ENCODE measurements at regions of chr7 and their contacts with region 1.

Region 1: GRCh38 chr7:151244196-151244840 is 4.2 kb downstream of the SMARCD3 start:
- DNase-seq: peak in 1 of 2 donors; percentile 54
- ATAC-seq: no peak
- H3K4me3 ChIP-seq: peak overlapping the region in 2 of 4 donors; percentile 26 to 44
- H3K27ac ChIP-seq: peak overlapping the region in 3 of 4 donors; percentile 92 to 99 (median 96)
- H3K4me1 ChIP-seq: peaks cover 47 to 50% of the 10 kb centered on the region in 2 donors
- H3K27me3 ChIP-seq: no peaks in the 10 kb centered on the region
- CTCF ChIP-seq: peak; percentile 75 to 92 (median 80)
- POLR2A ChIP-seq: no peak

Region 2: DNA sequence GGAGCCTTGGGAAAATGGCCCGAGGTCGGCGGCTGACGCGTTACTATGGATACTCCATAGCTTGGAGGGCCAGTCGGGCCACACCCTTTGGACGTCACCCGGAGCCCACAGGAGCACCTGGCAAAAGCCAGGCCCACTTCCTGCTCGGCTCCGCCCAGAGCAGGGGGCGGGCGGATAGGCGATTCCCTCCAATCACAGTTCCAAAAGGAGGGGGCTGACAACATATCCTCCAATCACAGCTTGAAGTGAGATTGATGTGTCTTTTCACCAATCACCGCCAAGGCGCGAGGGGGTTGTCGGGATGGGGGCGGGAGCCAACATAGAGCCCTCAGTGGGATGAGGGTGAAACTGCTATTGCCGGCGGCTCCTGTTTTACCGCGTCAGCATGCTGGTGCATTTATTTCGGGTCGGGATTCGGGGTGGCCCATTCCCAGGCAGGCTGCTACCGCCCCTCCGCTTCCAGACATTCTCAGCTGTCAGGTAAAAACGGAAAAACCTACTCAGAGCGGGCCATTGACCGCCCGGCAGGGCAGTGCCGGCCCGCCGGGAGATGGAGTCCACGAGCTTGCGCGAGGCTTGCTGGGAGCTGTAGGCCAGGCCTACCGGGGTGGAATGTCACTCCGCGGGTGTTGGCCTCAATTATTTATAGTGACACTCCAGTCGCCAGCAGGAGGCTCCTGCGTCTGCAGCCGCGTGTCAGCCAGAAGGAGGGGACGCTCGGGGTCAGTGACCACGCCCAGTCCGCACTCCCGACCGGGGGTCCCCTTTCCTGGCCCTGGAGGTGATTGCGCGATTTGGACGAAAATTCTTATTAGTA is 216.0 kb before region 1 on chr7 and contains the start of gene ABCB8:
- in situ Hi-C with region 1: no loop called
- intact Hi-C with region 1: loop called (anchors 5 kb)
- DNase-seq: peak; percentile 99 to 100
- ATAC-seq: peak; percentile 99 to 100
- H3K4me3 ChIP-seq: peak within 1 kb of the TSS; percentile 66 to 82 (median 74)
- H3K27ac ChIP-seq: peak within 1 kb of the TSS; percentile 87 to 94 (median 88)
- H3K4me1 ChIP-seq: peaks cover 9 to 12% of the 10 kb centered on the region in 2 donors
- H3K27me3 ChIP-seq: no peaks in the 10 kb centered on the region
- CTCF ChIP-seq: peak; percentile 49 to 77 (median 66)
- POLR2A ChIP-seq: peak; percentile 79 to 83
- total RNA-seq, gene ABCB8: 10.4 to 25.7 (median 16.2) TPM

Region 3: DNA sequence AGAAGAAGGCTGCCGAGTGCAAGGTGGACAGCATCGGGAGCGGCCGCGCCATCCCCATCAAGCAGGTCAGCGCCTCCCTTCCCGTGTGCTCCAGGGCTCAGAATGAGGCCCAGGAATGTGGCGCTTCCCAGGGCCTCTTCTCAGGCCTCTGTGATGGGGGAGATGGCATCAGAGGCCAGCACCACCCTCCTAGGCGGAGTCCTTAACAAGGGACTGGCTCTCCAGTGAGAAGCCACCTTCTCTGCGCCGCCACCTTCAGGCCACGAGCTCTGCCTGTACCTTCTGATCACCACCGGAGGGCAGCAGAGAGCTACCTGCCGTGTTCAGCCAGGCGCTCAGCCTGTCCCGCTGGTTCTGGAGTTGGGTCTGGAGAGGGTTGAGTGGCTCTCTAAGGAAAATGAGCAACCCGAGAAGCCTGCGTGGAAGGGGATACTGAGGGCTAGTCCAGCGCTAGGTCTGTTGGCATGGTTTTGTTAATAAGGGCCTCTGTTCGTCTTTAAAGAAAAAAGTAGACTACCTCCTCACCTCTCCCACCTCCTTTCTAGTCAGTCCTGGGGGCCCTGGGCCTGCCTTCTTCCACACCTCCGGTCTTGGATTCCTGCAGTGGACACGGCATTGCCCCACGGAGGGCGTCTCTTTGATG is 120.4 kb before region 1 on chr7:
- in situ Hi-C with region 1: no loop called
- intact Hi-C with region 1: loop called (anchors 2 kb)
- DNase-seq: peak; percentile 66 to 75
- ATAC-seq: peak; percentile 84 to 94
- H3K4me3 ChIP-seq: no peak overlapping the region
- H3K27ac ChIP-seq: no peak overlapping the region
- H3K4me1 ChIP-seq: peaks cover 4 to 22% of the 10 kb centered on the region in 2 donors
- H3K27me3 ChIP-seq: no peaks in the 10 kb centered on the region
- CTCF ChIP-seq: peak; percentile 85 to 98 (median 95)
- POLR2A ChIP-seq: no peak

Region 4: DNA sequence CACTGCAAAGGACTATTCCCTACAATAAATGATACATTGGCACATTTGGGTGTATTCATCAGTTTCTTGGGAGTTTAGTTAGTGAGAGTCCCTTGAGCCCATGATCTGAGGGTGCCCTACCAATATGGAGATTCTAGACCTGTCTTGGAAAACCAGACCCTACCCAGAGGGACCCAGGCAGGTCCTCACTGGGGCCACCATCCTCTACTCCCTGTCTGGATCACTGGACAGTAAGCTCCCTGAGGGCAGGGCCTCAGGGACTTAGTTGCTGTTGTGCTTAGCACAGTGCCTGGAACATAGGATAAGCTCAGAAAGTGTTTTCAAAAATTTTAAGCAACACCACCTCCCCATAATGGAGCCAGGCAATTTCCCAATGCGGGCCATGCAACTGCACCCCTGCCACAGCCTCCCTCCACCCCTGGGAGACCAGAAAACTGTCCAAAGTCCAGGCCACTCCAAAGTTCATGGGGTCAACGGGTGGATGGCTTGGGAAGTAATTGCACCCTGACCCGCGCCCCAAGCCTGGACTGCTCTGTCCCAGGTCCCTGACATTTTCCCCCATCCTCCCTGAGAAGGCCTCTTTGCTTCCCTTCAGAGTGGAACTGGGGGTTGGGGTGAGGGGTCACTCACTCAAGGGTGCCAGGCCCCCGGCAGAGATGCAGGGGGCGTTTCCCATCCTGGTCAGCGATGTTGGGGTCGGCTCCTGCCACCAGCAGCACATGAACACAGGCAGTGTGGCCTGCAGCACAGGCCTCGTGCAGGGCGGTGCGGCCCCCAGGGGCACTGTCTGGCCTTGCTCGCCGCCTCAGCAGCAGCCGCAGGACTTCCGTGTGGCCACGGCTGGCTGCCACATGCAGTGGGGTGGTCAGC is 58.3 kb before region 1 on chr7:
- in situ Hi-C with region 1: no loop called
- intact Hi-C with region 1: loop called (anchors 1 kb)
- DNase-seq: peak in 1 of 2 donors; percentile 55
- ATAC-seq: peak; percentile 28 to 33
- H3K4me3 ChIP-seq: peak overlapping the region; percentile 57 to 62 (median 60)
- H3K27ac ChIP-seq: peak overlapping the region; percentile 91 to 100 (median 99)
- H3K4me1 ChIP-seq: peaks cover 32 to 41% of the 10 kb centered on the region in 2 donors
- H3K27me3 ChIP-seq: no peaks in the 10 kb centered on the region
- CTCF ChIP-seq: peak in 2 of 5 experiments; percentile 12 to 40
- POLR2A ChIP-seq: no peak

Region 5: GRCh38 chr7:151304856-151305255 is 60.5 kb after region 1 on chr7:
- in situ Hi-C with region 1: no loop called
- intact Hi-C with region 1: loop called (anchors 2 kb)
- DNase-seq: no peak
- ATAC-seq: no peak
- H3K4me3 ChIP-seq: peak overlapping the region in 1 of 4 donors; percentile 21
- H3K27ac ChIP-seq: no peak overlapping the region
- H3K4me1 ChIP-seq: peaks cover 0 to 4% of the 10 kb centered on the region in 2 donors
- H3K27me3 ChIP-seq: peaks cover 10 to 16% (median 15%) of the 10 kb centered on the region in 3 donors
- CTCF ChIP-seq: no peak
- POLR2A ChIP-seq: no peak

Region 6: GRCh38 chr7:151503902-151504714 is 259.8 kb after region 1 on chr7:
- in situ Hi-C with region 1: no loop called
- intact Hi-C with region 1: no loop called
- DNase-seq: peak; percentile 78 to 80
- ATAC-seq: peak; percentile 89 to 93
- H3K4me3 ChIP-seq: no peak overlapping the region
- H3K27ac ChIP-seq: peak overlapping the region; percentile 77 to 98 (median 88)
- H3K4me1 ChIP-seq: peaks cover 84 to 89% of the 10 kb centered on the region in 2 donors
- H3K27me3 ChIP-seq: no peaks in the 10 kb centered on the region
- CTCF ChIP-seq: no peak
- POLR2A ChIP-seq: peak in 1 of 2 donors; percentile 59

Region 7: GRCh38 chr7:151736403-151736909 is 492.1 kb after region 1 on chr7:
- in situ Hi-C with region 1: no loop called
- intact Hi-C with region 1: loop called (anchors 5 kb)
- DNase-seq: peak; percentile 88 to 95
- ATAC-seq: peak; percentile 94
- H3K4me3 ChIP-seq: peak overlapping the region; percentile 43 to 48 (median 48)
- H3K27ac ChIP-seq: peak overlapping the region; percentile 74 to 91 (median 88)
- H3K4me1 ChIP-seq: peaks cover 16 to 18% of the 10 kb centered on the region in 2 donors
- H3K27me3 ChIP-seq: no peaks in the 10 kb centered on the region
- CTCF ChIP-seq: peak in 3 of 5 experiments; percentile 25 to 51 (median 41)
- POLR2A ChIP-seq: peak; percentile 74 to 85